CD8-positive, alpha-beta T cell (primary cell): ENCODE measurements at regions of chr20 and their contacts with region 1.

Region 1: DNA sequence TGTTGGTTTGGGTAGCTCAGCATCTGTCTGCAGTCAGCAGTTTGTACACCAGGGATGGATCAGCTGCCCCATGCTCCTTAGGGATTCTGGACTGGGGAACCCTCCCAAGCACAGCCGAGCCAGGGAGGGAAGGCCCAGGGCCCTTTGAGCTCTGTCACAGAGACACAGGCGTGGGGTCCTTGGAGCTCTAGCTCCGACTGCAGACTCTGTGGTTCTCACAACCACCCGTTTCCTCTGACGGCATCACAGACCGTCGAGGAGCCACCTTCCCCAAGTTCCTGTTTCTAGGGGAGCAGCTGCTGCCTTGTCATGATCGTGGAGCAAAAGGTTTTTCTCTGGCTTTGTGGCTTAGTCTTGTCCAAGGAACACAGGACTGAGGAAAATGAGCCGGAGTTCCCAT is at the start of gene SLA2:
- DNase-seq: peak; percentile 49 to 91 (median 76)
- ATAC-seq: peak; percentile 73
- H3K4me3 ChIP-seq: peak within 1 kb of the TSS; percentile 77 to 79
- H3K4me3 Mint-ChIP-seq: peak within 1 kb of the TSS; percentile 98
- H3K27ac ChIP-seq: peak within 1 kb of the TSS; percentile 77 to 84
- H3K27ac Mint-ChIP-seq: peak within 1 kb of the TSS; percentile 98
- H3K4me1 ChIP-seq: peaks cover 41% of the 10 kb centered on the region
- H3K4me1 Mint-ChIP-seq: peaks cover 58% of the 10 kb centered on the region
- H3K27me3 ChIP-seq: no peaks in the 10 kb centered on the region
- H3K27me3 Mint-ChIP-seq: no peaks in the 10 kb centered on the region
- CTCF ChIP-seq: no peak
- total RNA-seq, gene SLA2: 58.5 to 60.3 TPM

Region 2: DNA sequence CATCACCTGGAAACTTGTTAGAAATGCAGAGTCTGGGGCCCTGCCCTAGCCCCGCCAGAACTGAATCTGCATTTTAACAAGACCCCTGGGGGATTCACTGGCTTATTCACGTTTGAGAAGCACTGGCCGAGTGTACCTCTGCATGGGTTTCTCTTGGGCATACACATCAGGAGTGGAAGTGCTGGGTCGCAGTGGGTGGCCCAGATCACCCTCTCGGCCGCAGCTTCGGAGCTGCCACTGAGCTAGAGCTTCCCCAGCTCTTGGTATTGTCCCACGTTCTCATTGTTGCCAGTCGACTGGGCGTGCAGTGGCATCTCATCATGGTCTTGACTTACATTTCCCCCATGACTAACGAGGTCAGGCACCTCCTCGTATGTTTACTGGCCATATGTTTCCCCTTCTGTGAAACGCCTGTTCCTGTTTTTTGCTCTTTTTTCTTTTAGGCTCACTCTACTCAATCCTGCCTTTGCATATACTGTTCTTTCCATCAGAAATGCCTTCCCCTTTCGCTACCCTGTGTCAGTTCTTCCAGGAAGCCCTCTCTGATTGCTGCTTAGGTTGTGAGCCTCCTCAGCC is 342.9 kb before region 1 on chr20:
- CTCF ChIA-PET with region 1: no interaction called
- POLR2A ChIA-PET with region 1: no interaction called
- intact Hi-C with region 1: no loop called
- DNase-seq: no peak
- ATAC-seq: no peak
- H3K4me3 ChIP-seq: no peak overlapping the region
- H3K4me3 Mint-ChIP-seq: no peak overlapping the region
- H3K27ac ChIP-seq: no peak overlapping the region
- H3K27ac Mint-ChIP-seq: no peak overlapping the region
- H3K4me1 ChIP-seq: peaks cover 6% of the 10 kb centered on the region
- H3K4me1 Mint-ChIP-seq: peaks cover 7% of the 10 kb centered on the region
- H3K27me3 ChIP-seq: peaks cover 20% of the 10 kb centered on the region in 2 experiments
- H3K27me3 Mint-ChIP-seq: peaks cover 64% of the 10 kb centered on the region
- CTCF ChIP-seq: no peak

Region 3: GRCh38 chr20:36613974-36614373 is 32.0 kb before region 1 on chr20:
- CTCF ChIA-PET with region 1: interaction called, 56 read pairs
- POLR2A ChIA-PET with region 1: interaction called, 5 read pairs
- intact Hi-C with region 1: loop called (anchors 1 kb)
- DNase-seq: no peak
- ATAC-seq: no peak
- H3K4me3 ChIP-seq: no peak overlapping the region
- H3K4me3 Mint-ChIP-seq: no peak overlapping the region
- H3K27ac ChIP-seq: no peak overlapping the region
- H3K27ac Mint-ChIP-seq: peak overlapping the region; percentile 55
- H3K4me1 ChIP-seq: no peaks in the 10 kb centered on the region
- H3K4me1 Mint-ChIP-seq: peaks cover 16% of the 10 kb centered on the region
- H3K27me3 ChIP-seq: no peaks in the 10 kb centered on the region
- H3K27me3 Mint-ChIP-seq: no peaks in the 10 kb centered on the region
- CTCF ChIP-seq: no peak

Region 4: GRCh38 chr20:37490663-37491350 is 844.8 kb after region 1 on chr20:
- CTCF ChIA-PET with region 1: no interaction called
- POLR2A ChIA-PET with region 1: no interaction called
- intact Hi-C with region 1: no loop called
- DNase-seq: no peak
- ATAC-seq: no peak
- H3K4me3 ChIP-seq: no peak overlapping the region
- H3K4me3 Mint-ChIP-seq: no peak overlapping the region
- H3K27ac ChIP-seq: no peak overlapping the region
- H3K27ac Mint-ChIP-seq: no peak overlapping the region
- H3K4me1 ChIP-seq: no peaks in the 10 kb centered on the region
- H3K4me1 Mint-ChIP-seq: no peaks in the 10 kb centered on the region
- H3K27me3 ChIP-seq: no peaks in the 10 kb centered on the region
- H3K27me3 Mint-ChIP-seq: no peaks in the 10 kb centered on the region
- CTCF ChIP-seq: no peak